ENCODE measurements at regions of chr11 and their contacts with region 1.

Region 1: DNA sequence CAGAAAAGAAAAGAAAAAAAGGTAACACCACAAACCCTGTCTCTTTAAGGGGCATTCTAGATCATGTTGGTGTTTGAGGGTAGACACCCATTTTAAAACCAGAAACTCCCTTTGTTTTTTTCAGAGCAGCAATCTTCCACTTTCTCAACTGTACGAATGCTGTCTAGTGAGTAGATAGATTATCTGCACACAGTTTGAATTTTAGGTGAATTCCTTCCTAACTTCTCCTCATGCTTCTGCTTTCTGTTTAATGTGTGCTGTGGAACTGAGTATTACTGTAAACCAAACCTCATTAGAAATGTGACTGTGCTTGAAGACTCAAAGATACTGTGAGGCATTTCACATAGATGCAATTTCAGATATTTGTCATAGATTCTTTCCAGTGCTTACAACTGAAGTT is 102.4 kb downstream of the PRMT3 start:
- DNase-seq: no peak
- H3K4me3 ChIP-seq: no peak overlapping the region
- H3K27ac ChIP-seq: no peak overlapping the region
- H3K4me1 ChIP-seq: no peaks in the 10 kb centered on the region
- H3K27me3 ChIP-seq: no peaks in the 10 kb centered on the region
- CTCF ChIP-seq: no peak

Region 2: GRCh38 chr11:20421946-20422345 is 68.0 kb before region 1 on chr11:
- CTCF ChIA-PET with region 1: no interaction called
- POLR2A ChIA-PET with region 1: no interaction called
- intact Hi-C with region 1: no loop called
- DNase-seq: no peak
- H3K4me3 ChIP-seq: no peak overlapping the region
- H3K27ac ChIP-seq: no peak overlapping the region
- H3K4me1 ChIP-seq: no peaks in the 10 kb centered on the region
- H3K27me3 ChIP-seq: no peaks in the 10 kb centered on the region
- CTCF ChIP-seq: no peak

Region 3: DNA sequence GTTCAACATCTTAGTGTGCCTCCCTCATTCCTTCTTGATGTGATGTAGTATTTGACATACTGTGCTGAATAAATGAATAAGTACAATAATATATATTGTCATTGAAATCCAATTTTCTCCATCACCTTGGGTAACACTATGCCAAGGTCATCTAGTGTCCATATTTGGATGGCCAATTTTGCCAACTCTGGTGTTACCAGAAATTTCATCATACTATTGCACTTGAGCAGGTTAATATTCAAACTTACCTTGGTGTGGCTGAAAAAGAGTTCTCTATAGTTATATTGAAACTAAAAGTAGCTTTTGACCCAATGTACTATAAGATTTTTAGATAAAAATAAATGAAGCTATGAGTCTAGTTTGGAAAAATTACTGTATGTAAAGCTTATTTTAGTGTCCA is 11.3 kb after region 1 on chr11:
- CTCF ChIA-PET with region 1: no interaction called
- POLR2A ChIA-PET with region 1: interaction called, 14 read pairs
- intact Hi-C with region 1: no loop called
- DNase-seq: no peak
- H3K4me3 ChIP-seq: no peak overlapping the region
- H3K27ac ChIP-seq: no peak overlapping the region
- H3K4me1 ChIP-seq: no peaks in the 10 kb centered on the region
- H3K27me3 ChIP-seq: no peaks in the 10 kb centered on the region
- CTCF ChIP-seq: no peak